Activated CD4-positive, alpha-beta T cell treated with anti-CD3 and anti-CD28 coated beads for 36 hours (primary cell): ENCODE measurements at regions of chr3 and their contacts with region 1.

Region 1: DNA sequence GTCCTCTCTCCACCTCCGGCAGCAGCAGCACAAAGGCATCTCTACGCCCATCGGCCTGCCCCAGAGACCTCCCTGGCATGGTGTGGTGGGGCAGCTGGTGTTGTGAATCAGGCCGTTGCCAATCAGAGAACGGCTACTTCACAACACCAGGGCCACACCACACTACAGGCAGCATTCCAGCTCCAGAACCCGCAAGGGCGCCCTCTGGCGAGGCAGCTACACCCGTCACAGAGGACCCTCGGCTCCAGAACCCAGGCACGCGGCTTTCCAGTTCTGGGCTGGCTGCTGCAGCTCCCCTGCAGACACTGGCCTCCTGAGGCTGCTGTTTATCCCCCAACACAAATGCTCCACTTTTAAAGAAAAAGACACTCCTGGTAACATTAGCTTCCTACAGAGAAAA is 127.5 kb upstream of the TOPAZ1 start:
- DNase-seq: peak; percentile 72
- ATAC-seq: peak; percentile 63
- H3K4me3 Mint-ChIP-seq: no peak overlapping the region
- H3K27ac Mint-ChIP-seq: no peak overlapping the region
- H3K4me1 Mint-ChIP-seq: no peaks in the 10 kb centered on the region
- H3K27me3 Mint-ChIP-seq: peaks cover 14% of the 10 kb centered on the region

Region 2: DNA sequence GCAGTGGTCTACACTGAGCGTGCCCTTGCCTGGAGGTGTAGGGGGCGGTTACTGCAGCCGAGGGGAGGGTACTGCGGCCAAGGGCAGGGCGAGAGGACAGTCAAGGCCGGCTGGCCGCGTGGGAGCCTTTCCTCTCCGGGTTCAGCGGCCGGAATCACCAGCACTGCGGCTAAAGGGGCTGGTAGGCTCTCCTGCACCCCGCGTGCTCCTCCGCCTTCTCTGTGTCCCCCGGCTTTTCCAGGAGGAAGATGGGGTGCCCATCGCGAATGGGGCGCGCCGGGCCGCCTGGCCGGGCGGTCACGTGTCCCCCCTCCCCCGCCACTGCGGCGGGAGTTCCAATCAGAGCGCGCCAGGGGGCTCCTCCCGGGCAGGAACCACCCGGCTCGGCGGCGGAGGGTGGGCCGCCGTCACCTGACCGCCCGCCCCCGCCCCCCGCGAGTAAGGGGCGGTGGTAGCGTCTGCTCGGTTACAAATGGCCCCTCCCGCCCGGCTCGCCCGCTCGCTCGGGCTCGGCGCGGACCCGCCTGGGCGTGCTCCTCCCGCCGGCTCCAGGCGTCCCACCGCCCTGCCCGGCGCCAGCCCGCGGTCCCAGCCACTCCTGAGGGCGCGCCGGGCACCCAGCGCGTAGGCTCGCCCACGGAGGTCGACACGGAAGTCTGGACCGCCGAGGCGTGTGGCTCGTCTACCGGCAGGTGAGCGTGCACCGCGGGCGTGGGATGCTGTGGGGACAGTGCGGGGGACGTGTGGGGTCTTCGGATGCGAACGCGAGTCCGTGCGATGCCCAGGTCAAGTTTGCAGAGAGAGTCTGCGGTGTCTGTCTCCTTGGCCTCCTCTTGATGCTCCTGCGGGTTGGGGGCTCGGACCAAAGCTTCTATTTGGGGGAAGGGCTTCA is 115.1 kb before region 1 on chr3:
- CTCF ChIA-PET with region 1: no interaction called
- POLR2A ChIA-PET with region 1: no interaction called
- intact Hi-C with region 1: loop called (anchors 5 to 10 kb)
- DNase-seq: no peak
- ATAC-seq: no peak
- H3K4me3 Mint-ChIP-seq: peak overlapping the region; percentile 58
- H3K27ac Mint-ChIP-seq: no peak overlapping the region
- H3K4me1 Mint-ChIP-seq: peaks cover 39% of the 10 kb centered on the region
- H3K27me3 Mint-ChIP-seq: peaks cover 68% of the 10 kb centered on the region